AG04449 (cell line): ENCODE measurements at regions of chr1 and their contacts with region 1.

Region 1: GRCh38 chr1:154669464-154670282 is 61.7 kb upstream of the ADAR start:
- DNase-seq: peak; percentile 21
- H3K4me3 ChIP-seq: no peak overlapping the region
- CTCF ChIP-seq: peak; percentile 78

Region 2: GRCh38 chr1:154533952-154534844 is 135.5 kb before region 1 on chr1:
- CTCF ChIA-PET with region 1: no interaction called
- POLR2A ChIA-PET with region 1: no interaction called
- DNase-seq: no peak
- H3K4me3 ChIP-seq: no peak overlapping the region
- CTCF ChIP-seq: peak; percentile 35

Region 3: DNA sequence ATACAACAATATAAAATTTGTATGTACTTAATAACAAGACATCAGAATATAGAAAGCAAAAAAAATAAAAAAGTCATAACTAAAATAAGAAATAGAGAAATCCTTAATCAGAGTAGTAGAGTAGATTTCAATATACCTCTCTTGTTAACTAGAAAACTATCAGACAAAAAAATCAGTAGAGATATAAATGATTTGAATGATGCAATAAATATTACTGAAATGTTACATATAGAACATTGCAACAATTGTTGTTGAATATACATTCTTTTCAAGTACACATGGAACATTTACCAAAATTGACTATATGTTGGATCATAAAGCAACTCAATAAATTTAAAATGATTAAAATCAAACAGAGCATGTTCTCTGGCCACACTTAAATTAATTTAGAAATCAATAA is 29.8 kb before region 1 on chr1:
- CTCF ChIA-PET with region 1: no interaction called
- POLR2A ChIA-PET with region 1: no interaction called
- DNase-seq: no peak
- H3K4me3 ChIP-seq: no peak overlapping the region
- CTCF ChIP-seq: no peak

Region 4: GRCh38 chr1:154657556-154657955 is 12.1 kb before region 1 on chr1:
- CTCF ChIA-PET with region 1: interaction called, 10 read pairs
- POLR2A ChIA-PET with region 1: no interaction called
- DNase-seq: no peak
- H3K4me3 ChIP-seq: no peak overlapping the region
- CTCF ChIP-seq: no peak

Region 5: GRCh38 chr1:154682254-154682653 is 12.6 kb after region 1 on chr1:
- CTCF ChIA-PET with region 1: interaction called, 14 read pairs
- POLR2A ChIA-PET with region 1: no interaction called
- DNase-seq: no peak
- H3K4me3 ChIP-seq: no peak overlapping the region
- CTCF ChIP-seq: no peak

Region 6: DNA sequence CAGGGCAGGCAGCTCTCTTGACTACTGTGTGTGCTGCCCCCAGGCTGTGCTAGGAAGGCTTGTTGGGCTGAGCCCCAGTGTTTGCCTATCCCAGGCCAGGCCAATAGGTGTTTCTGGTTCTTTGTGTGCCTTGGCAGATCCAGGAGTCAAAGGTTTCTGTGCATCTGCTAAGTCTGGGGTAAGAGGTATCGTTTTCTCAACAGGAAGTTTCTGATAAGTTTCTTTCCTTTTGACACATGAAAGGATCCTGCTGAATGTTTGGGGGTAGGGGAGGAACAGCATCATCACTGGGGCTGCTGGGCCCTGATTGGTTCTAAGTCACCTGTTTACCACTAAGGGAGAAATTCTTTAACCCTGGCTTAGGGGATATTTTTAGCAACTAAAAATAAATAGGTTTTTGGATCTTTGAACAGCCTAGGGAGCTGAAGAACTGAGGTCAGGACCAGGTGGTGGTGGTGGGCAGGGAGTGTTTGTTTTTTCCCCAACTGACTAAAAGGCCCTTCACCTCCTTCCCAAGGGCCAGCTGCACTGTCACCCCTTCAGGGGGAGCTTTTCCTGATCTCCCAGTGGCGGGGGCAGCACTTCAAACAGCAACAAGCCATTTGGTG is 115.4 kb after region 1 on chr1:
- CTCF ChIA-PET with region 1: no interaction called
- POLR2A ChIA-PET with region 1: no interaction called
- DNase-seq: no peak
- H3K4me3 ChIP-seq: no peak overlapping the region
- CTCF ChIP-seq: no peak

Region 7: DNA sequence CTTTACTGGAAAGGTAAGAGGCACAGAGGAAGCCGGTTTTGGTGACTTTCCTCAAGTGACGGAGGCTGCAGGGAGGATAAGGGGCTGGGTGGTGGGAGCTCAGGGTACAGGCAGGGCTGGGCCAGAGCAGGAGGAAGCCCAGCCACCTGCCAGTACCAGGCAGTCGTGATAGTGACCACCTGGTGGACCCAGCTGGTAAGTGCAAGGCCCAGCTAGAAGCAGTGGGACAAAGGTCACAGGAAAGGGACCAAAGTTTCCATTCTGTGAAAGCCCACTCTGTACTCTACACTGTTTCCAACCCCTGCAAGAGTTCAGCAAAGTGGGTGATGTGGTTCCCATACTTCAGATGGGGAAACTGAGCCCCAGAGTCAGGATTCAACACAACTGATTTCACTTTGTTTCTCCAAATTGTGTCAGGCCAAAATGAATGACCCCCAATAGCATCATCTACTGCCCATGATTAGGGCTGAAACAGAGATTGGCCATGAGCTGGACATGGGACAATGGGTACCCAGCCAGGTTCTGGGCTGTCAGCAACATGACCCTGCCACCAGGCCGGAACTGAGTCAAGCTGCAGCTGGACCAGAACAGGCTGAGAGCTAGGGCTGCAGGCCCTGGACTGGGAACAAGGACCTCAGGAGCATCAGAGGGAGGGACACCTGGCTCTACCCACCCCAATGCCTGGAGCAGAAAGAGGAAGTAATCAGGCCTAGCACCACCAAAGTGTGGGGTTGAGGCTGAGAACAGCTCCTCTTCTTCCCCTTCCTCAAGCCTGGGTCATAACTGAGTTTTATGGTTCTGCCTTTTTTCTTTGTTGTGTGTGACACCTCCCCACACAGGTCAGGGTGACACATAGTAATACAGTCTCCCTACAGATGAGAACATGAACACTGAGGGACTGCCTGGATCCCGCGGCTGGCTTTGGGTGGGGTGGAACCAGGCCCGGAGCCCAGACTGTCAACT is 150.2 kb after region 1 on chr1:
- CTCF ChIA-PET with region 1: no interaction called
- POLR2A ChIA-PET with region 1: no interaction called
- DNase-seq: no peak
- H3K4me3 ChIP-seq: no peak overlapping the region
- CTCF ChIP-seq: peak; percentile 26

Region 8: GRCh38 chr1:154870115-154870571 is 200.5 kb after region 1 on chr1 and contains the start of gene KCNN3:
- CTCF ChIA-PET with region 1: interaction called, 129 read pairs
- POLR2A ChIA-PET with region 1: no interaction called
- DNase-seq: no peak
- H3K4me3 ChIP-seq: peak within 1 kb of the TSS; percentile 36
- CTCF ChIP-seq: no peak

Region 9: GRCh38 chr1:154878371-154879022 is 208.8 kb after region 1 on chr1:
- CTCF ChIA-PET with region 1: interaction called, 129 read pairs
- POLR2A ChIA-PET with region 1: no interaction called
- DNase-seq: no peak
- H3K4me3 ChIP-seq: no peak overlapping the region
- CTCF ChIP-seq: peak; percentile 94

Region 10: DNA sequence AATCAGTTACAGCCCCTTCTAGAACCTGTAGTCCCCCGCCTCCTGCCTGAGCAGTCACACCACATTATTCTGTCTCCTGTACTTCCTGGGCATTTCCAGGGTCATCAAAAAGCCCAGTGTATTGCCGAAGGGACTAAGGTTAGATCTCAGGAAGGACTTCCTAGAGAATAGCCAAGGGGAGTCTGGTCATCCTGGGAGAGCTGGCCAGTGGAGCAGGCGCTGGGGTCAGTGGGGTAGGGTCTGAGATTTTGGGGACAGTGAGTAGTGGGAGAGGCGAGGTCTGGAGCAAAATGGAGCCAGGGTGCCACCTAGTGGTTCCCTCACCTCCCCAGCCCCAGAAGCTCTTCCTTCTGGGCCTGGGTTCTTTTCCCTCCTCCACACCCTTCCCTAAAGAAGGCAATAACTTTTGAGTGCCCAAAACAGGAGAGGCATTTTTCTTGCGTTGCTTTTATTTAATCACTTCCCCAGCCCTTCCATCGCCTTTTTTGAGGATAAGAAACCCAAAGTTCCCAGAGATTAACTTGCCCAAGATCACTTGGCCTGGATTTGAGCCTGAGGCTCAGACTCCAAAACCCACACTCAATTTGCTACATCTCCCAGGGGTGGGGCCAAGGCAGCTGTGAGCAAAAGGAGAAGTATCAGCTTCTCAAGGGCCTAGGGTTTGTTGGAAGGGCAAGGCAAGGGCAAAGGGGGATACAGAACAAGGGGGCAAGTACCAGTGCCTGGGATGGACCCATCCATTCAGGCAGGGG is 274.2 kb after region 1 on chr1:
- CTCF ChIA-PET with region 1: interaction called, 10 read pairs
- POLR2A ChIA-PET with region 1: no interaction called
- DNase-seq: no peak
- H3K4me3 ChIP-seq: no peak overlapping the region
- CTCF ChIP-seq: peak; percentile 79